CD4-positive, alpha-beta memory T cell (primary cell): ENCODE measurements at regions of chr12 and their contacts with region 1.

Region 1: GRCh38 chr12:111056618-111057521 is 136.5 kb upstream of the MYL2 start:
- DNase-seq: peak; percentile 68 to 80 (median 74)
- H3K4me3 ChIP-seq: peak overlapping the region in 1 of 2 donors; percentile 17
- H3K4me3 Mint-ChIP-seq: peak overlapping the region in 7 of 8 donors; percentile 37 to 88 (median 62)
- H3K27ac ChIP-seq: peak overlapping the region; percentile 39
- H3K27ac Mint-ChIP-seq: peak overlapping the region; percentile 79 to 98 (median 95)
- H3K4me1 ChIP-seq: peaks cover 35% of the 10 kb centered on the region
- H3K4me1 Mint-ChIP-seq: peaks cover 31 to 35% (median 33%) of the 10 kb centered on the region in 4 donors
- H3K27me3 ChIP-seq: no peaks in the 10 kb centered on the region
- H3K27me3 Mint-ChIP-seq: no peaks in the 10 kb centered on the region

Region 2: DNA sequence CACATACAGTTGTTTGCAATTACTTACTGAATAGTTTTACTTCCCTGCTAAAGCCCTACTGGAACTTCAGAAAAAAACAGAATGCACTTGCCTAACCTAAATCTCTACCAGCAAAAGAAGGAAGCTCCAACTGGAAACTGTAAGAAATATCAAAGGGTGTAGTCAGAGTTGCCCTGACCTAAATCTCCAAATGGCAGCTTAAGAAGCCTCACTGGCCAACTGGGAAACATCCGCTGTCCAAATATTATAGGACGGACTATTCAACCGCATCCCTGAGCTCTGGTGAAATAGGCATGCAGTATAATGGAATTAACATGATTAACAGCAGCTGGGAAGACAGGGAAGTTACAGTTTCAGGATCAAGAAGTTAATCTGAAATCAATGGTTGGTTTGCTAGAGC is 677.7 kb before region 1 on chr12:
- CTCF ChIA-PET with region 1: no interaction called
- POLR2A ChIA-PET with region 1: no interaction called
- intact Hi-C with region 1: no loop called
- DNase-seq: no peak
- H3K4me3 ChIP-seq: no peak overlapping the region
- H3K4me3 Mint-ChIP-seq: no peak overlapping the region
- H3K27ac ChIP-seq: no peak overlapping the region
- H3K27ac Mint-ChIP-seq: no peak overlapping the region
- H3K4me1 ChIP-seq: no peaks in the 10 kb centered on the region
- H3K4me1 Mint-ChIP-seq: peaks cover 0 to 6% (median 4%) of the 10 kb centered on the region in 4 donors
- H3K27me3 ChIP-seq: no peaks in the 10 kb centered on the region
- H3K27me3 Mint-ChIP-seq: no peaks in the 10 kb centered on the region

Region 3: DNA sequence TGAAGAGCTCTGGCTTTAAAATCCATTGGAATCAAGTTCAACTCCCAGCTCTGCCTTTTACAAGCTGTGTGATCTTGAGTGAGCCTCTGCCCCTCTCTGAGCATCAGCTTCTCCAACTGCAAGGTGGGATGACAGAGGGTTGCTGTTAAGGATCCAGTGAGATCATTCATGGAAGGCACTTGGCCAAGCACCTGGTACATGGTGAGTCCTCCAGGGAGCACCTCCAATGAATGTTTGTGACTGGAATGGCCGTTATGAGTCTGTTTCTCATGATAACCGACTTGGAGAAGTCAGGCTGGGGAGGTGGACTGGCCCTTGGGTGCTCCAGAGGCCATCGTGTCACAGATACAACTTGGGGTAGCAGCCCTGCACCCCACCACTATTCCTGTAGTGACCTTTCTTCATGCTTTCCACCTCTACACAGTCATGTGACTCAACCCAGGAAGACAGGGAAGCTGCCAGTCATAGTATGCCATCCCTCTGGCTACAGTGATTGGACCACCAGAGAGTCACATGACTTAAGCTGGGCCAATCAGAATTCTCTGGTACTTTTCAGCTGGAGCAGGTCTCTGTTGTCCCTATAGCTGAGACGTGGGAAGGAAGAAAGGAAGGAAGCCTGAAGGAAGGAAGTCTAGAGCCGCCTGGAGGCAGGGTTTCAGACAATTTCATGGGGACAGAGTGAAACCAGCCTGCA is 10.0 kb after region 1 on chr12:
- CTCF ChIA-PET with region 1: no interaction called
- POLR2A ChIA-PET with region 1: interaction called, 10 read pairs
- intact Hi-C with region 1: no loop called
- DNase-seq: no peak
- H3K4me3 ChIP-seq: no peak overlapping the region
- H3K4me3 Mint-ChIP-seq: no peak overlapping the region
- H3K27ac ChIP-seq: no peak overlapping the region
- H3K27ac Mint-ChIP-seq: peak overlapping the region in 1 of 7 donors; percentile 61
- H3K4me1 ChIP-seq: no peaks in the 10 kb centered on the region
- H3K4me1 Mint-ChIP-seq: peaks cover 7 to 24% (median 15%) of the 10 kb centered on the region in 4 donors
- H3K27me3 ChIP-seq: peaks cover 3% of the 10 kb centered on the region
- H3K27me3 Mint-ChIP-seq: peaks cover 0 to 2% of the 10 kb centered on the region in 2 donors

Region 4: DNA sequence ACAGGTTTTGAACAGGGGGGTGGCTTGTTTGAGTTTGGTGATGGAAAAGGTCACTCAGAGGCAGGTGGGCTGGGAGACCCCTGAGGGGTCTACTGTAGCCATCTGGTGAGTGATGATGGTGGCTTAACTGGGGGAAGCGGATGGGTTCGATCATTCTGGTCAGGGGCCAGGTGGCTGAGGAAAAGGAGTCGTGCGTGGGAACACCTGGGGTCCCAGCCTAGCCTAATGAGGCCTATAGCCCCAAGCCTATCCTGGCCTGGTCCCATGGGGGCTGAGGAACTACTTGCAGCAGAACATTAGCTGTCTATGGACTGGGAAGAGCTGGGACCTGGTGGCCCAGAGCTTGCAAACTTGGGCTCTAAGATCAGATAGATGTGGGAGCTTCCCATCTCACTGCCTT is 21.9 kb after region 1 on chr12:
- CTCF ChIA-PET with region 1: no interaction called
- POLR2A ChIA-PET with region 1: no interaction called
- intact Hi-C with region 1: no loop called
- DNase-seq: no peak
- H3K4me3 ChIP-seq: no peak overlapping the region
- H3K4me3 Mint-ChIP-seq: no peak overlapping the region
- H3K27ac ChIP-seq: no peak overlapping the region
- H3K27ac Mint-ChIP-seq: no peak overlapping the region
- H3K4me1 ChIP-seq: no peaks in the 10 kb centered on the region
- H3K4me1 Mint-ChIP-seq: no peaks in the 10 kb centered on the region
- H3K27me3 ChIP-seq: peaks cover 4% of the 10 kb centered on the region
- H3K27me3 Mint-ChIP-seq: peaks cover 10 to 15% of the 10 kb centered on the region in 2 donors